ENCODE measurements at regions of chr7 and their contacts with region 1.

Region 1: DNA sequence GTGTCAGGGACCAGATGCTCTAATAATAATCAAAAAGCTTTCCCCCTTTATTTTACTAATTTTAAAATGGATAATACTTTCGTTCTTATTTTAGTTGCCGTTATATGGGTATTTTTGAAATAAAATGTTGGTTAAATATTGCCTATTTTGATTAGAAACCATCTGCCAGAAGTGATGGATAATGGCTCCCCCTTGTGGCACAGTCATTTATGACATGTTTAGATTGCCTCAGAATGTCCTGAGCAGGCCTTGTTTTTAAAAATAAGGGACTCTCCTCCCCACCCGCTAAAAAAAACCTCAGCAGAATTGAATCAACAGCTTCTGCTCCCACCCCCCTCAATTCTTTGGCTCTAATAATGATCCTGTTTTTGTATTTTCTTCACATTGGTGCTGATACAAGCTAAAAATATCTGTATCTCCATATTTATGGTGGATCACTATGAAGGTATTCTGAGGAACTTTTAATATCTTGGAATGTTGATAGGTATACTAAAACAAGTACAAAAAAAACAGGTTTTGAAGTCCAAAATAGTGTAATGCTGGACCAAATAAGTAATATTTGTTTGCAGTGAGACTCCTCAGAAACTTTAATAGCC is 38.8 kb downstream of the TMEM60 start:
- DNase-seq: peak; percentile 37 to 86 (median 69)
- ATAC-seq: peak; percentile 88
- H3K4me3 ChIP-seq: no peak overlapping the region
- H3K4me3 Mint-ChIP-seq: no peak overlapping the region
- H3K27ac ChIP-seq: no peak overlapping the region
- H3K27ac Mint-ChIP-seq: peak overlapping the region; percentile 17
- H3K4me1 ChIP-seq: no peaks in the 10 kb centered on the region
- H3K4me1 Mint-ChIP-seq: peaks cover 51% of the 10 kb centered on the region
- H3K27me3 ChIP-seq: no peaks in the 10 kb centered on the region
- H3K27me3 Mint-ChIP-seq: no peaks in the 10 kb centered on the region
- CTCF ChIP-seq: peak; percentile 97

Region 2: GRCh38 chr7:77439572-77439971 is 319.8 kb before region 1 on chr7:
- CTCF ChIA-PET with region 1: no interaction called
- POLR2A ChIA-PET with region 1: no interaction called
- intact Hi-C with region 1: loop called in 1 of 2 experiments (anchors 10 kb)
- DNase-seq: no peak
- ATAC-seq: no peak
- H3K4me3 ChIP-seq: no peak overlapping the region
- H3K4me3 Mint-ChIP-seq: no peak overlapping the region
- H3K27ac ChIP-seq: no peak overlapping the region
- H3K27ac Mint-ChIP-seq: no peak overlapping the region
- H3K4me1 ChIP-seq: no peaks in the 10 kb centered on the region
- H3K4me1 Mint-ChIP-seq: no peaks in the 10 kb centered on the region
- H3K27me3 ChIP-seq: no peaks in the 10 kb centered on the region
- H3K27me3 Mint-ChIP-seq: no peaks in the 10 kb centered on the region
- CTCF ChIP-seq: no peak

Region 3: DNA sequence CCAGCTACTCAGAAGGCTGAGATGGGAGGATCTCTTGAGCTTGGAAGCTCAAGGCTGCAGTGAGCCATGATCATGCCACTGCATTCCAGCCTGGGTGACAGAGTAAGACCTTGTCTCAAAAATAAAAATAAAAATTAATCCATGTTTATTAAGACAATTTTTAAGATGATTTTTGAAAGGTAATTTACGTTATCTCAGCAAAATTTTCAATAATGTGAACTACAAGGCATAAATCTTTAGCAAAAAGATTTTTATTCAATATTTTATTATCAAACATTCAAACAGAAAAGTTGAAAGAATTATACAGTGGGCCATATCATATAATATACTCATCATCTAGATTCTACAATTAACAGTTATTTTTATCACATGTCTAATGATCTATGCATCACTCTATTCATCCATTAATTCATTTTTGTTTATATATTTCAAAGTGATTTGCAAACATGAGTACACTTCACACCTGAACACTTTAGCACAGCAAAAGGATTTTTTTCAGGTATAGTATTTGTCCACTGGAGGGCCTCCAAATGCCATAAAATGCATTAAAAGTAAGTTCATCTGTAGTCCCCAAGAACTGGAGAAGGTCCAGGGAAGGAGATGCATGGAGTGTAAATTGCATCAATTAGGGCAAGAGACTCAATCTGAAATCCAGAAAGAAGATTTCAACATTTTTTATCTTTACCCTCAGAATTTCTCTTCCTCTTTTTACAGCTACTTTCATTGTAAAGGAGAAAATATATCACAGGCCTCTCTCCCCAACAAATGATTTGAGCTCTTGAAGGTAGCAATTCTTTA is 101.8 kb before region 1 on chr7:
- CTCF ChIA-PET with region 1: interaction called, 102 read pairs
- POLR2A ChIA-PET with region 1: no interaction called
- intact Hi-C with region 1: loop called (anchors 1 kb)
- DNase-seq: peak in 2 of 9 experiments; percentile 52 to 64
- ATAC-seq: peak; percentile 59
- H3K4me3 ChIP-seq: no peak overlapping the region
- H3K4me3 Mint-ChIP-seq: no peak overlapping the region
- H3K27ac ChIP-seq: no peak overlapping the region
- H3K27ac Mint-ChIP-seq: no peak overlapping the region
- H3K4me1 ChIP-seq: no peaks in the 10 kb centered on the region
- H3K4me1 Mint-ChIP-seq: no peaks in the 10 kb centered on the region
- H3K27me3 ChIP-seq: no peaks in the 10 kb centered on the region
- H3K27me3 Mint-ChIP-seq: no peaks in the 10 kb centered on the region
- CTCF ChIP-seq: peak; percentile 83

Region 4: DNA sequence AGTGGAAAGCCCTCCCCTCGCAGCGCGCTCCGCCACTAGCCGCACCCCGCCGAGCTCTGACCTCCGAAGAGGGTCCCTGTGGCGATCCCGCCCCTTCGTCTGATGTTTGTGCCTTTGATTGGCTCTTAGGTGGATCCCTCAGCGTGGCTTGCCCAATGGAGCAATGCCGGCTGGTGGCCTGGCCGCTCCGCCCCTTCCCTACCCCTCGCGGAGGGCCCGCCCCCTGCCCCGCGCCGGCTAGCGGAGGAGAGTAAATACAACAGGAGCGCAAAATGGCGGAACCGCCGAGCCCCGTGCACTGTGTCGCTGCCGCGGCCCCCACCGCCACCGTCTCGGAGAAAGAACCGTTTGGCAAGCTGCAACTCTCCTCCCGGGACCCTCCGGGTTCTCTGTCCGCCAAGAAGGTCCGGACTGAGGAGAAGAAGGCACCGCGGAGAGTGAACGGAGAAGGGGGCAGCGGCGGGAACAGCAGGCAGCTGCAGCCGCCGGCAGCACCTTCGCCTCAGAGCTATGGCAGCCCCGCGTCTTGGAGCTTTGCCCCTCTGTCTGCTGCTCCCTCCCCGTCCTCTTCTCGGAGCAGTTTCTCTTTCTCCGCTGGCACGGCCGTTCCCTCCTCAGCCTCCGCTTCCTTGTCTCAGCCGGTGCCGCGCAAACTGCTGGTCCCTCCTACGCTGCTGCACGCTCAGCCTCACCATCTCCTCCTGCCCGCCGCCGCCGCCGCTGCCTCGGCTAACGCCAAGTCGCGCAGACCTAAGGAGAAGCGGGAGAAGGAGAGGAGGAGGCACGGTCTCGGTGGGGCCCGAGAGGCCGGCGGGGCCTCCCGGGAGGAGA is 63.0 kb before region 1 on chr7 and contains the start of gene RSBN1L:
- CTCF ChIA-PET with region 1: interaction called, 5 read pairs
- POLR2A ChIA-PET with region 1: interaction called, 3 read pairs
- intact Hi-C with region 1: loop called (anchors 2 to 5 kb)
- DNase-seq: peak; percentile 96 to 99 (median 98)
- ATAC-seq: peak; percentile 93
- H3K4me3 ChIP-seq: peak within 1 kb of the TSS; percentile 98 to 99
- H3K4me3 Mint-ChIP-seq: peak within 1 kb of the TSS; percentile 99
- H3K27ac ChIP-seq: peak within 1 kb of the TSS; percentile 93 to 94
- H3K27ac Mint-ChIP-seq: peak within 1 kb of the TSS; percentile 98
- H3K4me1 ChIP-seq: peaks cover 27% of the 10 kb centered on the region
- H3K4me1 Mint-ChIP-seq: peaks cover 68% of the 10 kb centered on the region
- H3K27me3 ChIP-seq: no peaks in the 10 kb centered on the region
- H3K27me3 Mint-ChIP-seq: no peaks in the 10 kb centered on the region
- CTCF ChIP-seq: peak; percentile 34
- total RNA-seq, gene RSBN1L: 7.4 to 10.0 TPM

Region 5: GRCh38 chr7:77798394-77799077 is 39.1 kb after region 1 on chr7 and contains the starts of genes PHTF2 and TMEM60:
- CTCF ChIA-PET with region 1: interaction called, 4 read pairs
- POLR2A ChIA-PET with region 1: no interaction called
- intact Hi-C with region 1: loop called in 1 of 2 experiments (anchors 2 kb)
- DNase-seq: peak; percentile 85 to 98 (median 90)
- ATAC-seq: peak; percentile 88
- H3K4me3 ChIP-seq: peak within 1 kb of the TSS; percentile 70 to 81
- H3K4me3 Mint-ChIP-seq: peak within 1 kb of the TSS; percentile 97
- H3K27ac ChIP-seq: peak within 1 kb of the TSS; percentile 61 to 75
- H3K27ac Mint-ChIP-seq: peak within 1 kb of the TSS; percentile 96
- H3K4me1 ChIP-seq: peaks cover 39% of the 10 kb centered on the region
- H3K4me1 Mint-ChIP-seq: peaks cover 78% of the 10 kb centered on the region
- H3K27me3 ChIP-seq: no peaks in the 10 kb centered on the region
- H3K27me3 Mint-ChIP-seq: no peaks in the 10 kb centered on the region
- CTCF ChIP-seq: peak; percentile 67
- total RNA-seq, gene PHTF2: 10.2 to 14.1 TPM
- total RNA-seq, gene TMEM60: 2.2 TPM

Measured in CD8-positive, alpha-beta T cell (primary cell).